ENCODE measurements at regions of chr4 and their contacts with region 1.

Region 1: DNA sequence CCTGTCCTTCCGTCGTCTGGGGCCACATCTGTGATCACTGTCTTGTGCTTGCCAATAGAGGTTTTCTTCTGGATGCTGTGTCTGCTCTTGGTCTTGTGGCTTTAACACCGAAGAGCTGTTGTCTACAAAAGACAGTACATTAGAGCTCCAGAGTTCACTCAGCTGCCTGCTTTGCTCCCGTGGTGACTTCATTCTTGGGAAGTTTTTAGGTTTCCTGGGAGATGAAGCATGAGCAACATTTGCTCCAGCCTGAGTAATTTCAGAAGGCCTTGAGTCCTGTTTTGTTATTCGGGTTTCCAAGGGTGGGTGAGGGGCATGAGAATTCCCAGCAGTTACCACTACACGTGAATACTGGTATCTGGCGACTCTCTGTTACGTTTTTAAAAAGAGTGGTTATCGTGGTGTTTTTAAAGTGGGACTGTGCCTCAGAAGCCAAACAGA is 189.2 kb downstream of the SHROOM3 start:
- DNase-seq: no peak
- H3K4me3 ChIP-seq: no peak overlapping the region; a peak in 1 of 8 replicates
- H3K27ac ChIP-seq: no peak overlapping the region
- H3K4me1 ChIP-seq: peaks cover 5 to 25% (median 7%) of the 10 kb centered on the region in 4 experiments; a peak in 5 of 7 replicates
- H3K27me3 ChIP-seq: no peaks in the 10 kb centered on the region
- CTCF ChIP-seq: no peak
- EP300 ChIP-seq: no peak
- POLR2A ChIP-seq: no peak
- RAD21 ChIP-seq: no peak

Region 2: GRCh38 chr4:76639292-76639691 is 15.0 kb after region 1 on chr4:
- CTCF ChIA-PET with region 1: interaction called, 17 read pairs
- POLR2A ChIA-PET with region 1: interaction called, 3 read pairs
- DNase-seq: no peak
- H3K4me3 ChIP-seq: no peak overlapping the region
- H3K27ac ChIP-seq: no peak overlapping the region
- H3K4me1 ChIP-seq: peaks cover 2 to 10% (median 4%) of the 10 kb centered on the region in 4 experiments; a peak in 6 of 7 replicates
- H3K27me3 ChIP-seq: no peaks in the 10 kb centered on the region
- CTCF ChIP-seq: no peak
- EP300 ChIP-seq: no peak
- POLR2A ChIP-seq: no peak
- RAD21 ChIP-seq: no peak

Region 3: GRCh38 chr4:76651616-76652015 is 27.4 kb after region 1 on chr4:
- CTCF ChIA-PET with region 1: interaction called, 12 read pairs
- POLR2A ChIA-PET with region 1: no interaction called
- DNase-seq: no peak
- H3K4me3 ChIP-seq: no peak overlapping the region
- H3K27ac ChIP-seq: no peak overlapping the region
- H3K4me1 ChIP-seq: no peaks in the 10 kb centered on the region
- H3K27me3 ChIP-seq: no peaks in the 10 kb centered on the region
- CTCF ChIP-seq: no peak
- EP300 ChIP-seq: no peak
- POLR2A ChIP-seq: no peak
- RAD21 ChIP-seq: no peak

Region 4: GRCh38 chr4:76723924-76724323 is 99.7 kb after region 1 on chr4:
- CTCF ChIA-PET with region 1: interaction called, 11 read pairs
- POLR2A ChIA-PET with region 1: no interaction called
- DNase-seq: no peak
- H3K4me3 ChIP-seq: no peak overlapping the region
- H3K27ac ChIP-seq: no peak overlapping the region; the same call in 1 of the 2 replicates
- H3K4me1 ChIP-seq: peaks cover 0 to 16% (median 8%) of the 10 kb centered on the region in 4 experiments; a peak in 4 of 7 replicates
- H3K27me3 ChIP-seq: no peaks in the 10 kb centered on the region
- CTCF ChIP-seq: no peak
- EP300 ChIP-seq: no peak
- POLR2A ChIP-seq: no peak
- RAD21 ChIP-seq: no peak

Measured in H1 (cell line).